Common myeloid progenitor, CD34-positive (primary cell): ENCODE measurements at regions of chr14 and their contacts with region 1.

Region 1: GRCh38 chr14:58833634-58834378 is 196.0 kb downstream of the DACT1 start:
- DNase-seq: no peak
- H3K4me3 ChIP-seq: no peak overlapping the region
- H3K27ac ChIP-seq: no peak overlapping the region
- H3K4me1 ChIP-seq: no peaks in the 10 kb centered on the region
- H3K27me3 ChIP-seq: no peaks in the 10 kb centered on the region

Region 2: DNA sequence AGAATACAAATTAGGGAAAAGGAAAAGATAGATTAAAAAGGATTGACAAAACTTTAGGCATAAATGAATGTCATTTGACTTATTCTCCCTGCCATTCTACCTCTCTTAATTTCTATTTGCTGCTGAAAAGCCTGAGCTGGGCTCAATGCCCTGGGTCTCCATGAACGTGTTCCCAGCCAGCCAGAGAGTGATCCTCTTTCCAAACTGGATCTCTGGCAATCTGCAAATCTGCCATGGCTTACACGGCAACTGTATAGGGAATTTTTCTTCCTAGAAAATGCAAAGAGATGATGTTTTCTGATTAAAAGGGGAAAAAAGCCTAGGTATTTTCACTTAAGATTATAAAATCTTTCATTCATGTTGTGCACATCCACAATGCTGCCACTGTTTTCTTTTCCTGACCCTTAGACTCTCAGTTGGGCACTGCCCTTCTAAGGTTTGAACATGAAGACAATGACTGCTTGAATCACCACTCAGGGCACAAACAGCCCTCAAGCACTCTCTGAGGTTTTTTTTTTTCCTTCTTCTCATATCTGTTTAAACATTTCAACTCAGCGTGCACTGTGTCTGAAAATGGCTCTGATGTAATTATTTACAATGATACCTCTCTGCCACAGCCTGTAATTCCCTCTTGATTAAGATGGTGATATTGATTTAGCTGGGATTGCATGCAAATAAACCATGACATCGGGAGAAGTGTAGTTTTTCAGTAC is 135.7 kb before region 1 on chr14:
- CTCF ChIA-PET with region 1: no interaction called
- POLR2A ChIA-PET with region 1: no interaction called
- DNase-seq: no peak
- H3K4me3 ChIP-seq: no peak overlapping the region
- H3K27ac ChIP-seq: no peak overlapping the region
- H3K4me1 ChIP-seq: no peaks in the 10 kb centered on the region
- H3K27me3 ChIP-seq: no peaks in the 10 kb centered on the region

Region 3: GRCh38 chr14:58794993-58795762 is 38.6 kb before region 1 on chr14:
- CTCF ChIA-PET with region 1: no interaction called
- POLR2A ChIA-PET with region 1: interaction called, 10 read pairs
- DNase-seq: no peak
- H3K4me3 ChIP-seq: no peak overlapping the region
- H3K27ac ChIP-seq: no peak overlapping the region
- H3K4me1 ChIP-seq: no peaks in the 10 kb centered on the region
- H3K27me3 ChIP-seq: no peaks in the 10 kb centered on the region

Region 4: DNA sequence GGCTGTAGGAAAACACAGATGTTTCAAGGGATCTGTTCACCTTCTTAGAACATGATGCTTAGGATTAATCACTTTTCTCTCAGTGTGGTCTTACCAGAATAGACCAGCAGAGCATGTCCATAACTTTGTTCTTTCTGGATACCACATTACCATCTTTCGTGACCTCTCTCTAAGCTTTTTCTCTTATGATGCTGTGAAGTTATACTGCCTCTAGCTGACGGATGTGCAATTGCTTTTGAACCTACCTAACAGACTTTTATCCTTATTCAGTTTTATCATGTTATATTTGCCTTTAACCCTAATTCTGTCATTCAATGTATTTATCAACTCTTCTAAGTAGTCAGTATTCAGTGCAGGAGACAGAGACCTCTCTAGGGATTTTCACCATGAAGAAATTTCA is 50.6 kb after region 1 on chr14:
- CTCF ChIA-PET with region 1: no interaction called
- POLR2A ChIA-PET with region 1: no interaction called
- DNase-seq: no peak
- H3K4me3 ChIP-seq: no peak overlapping the region
- H3K27ac ChIP-seq: no peak overlapping the region
- H3K4me1 ChIP-seq: no peaks in the 10 kb centered on the region
- H3K27me3 ChIP-seq: no peaks in the 10 kb centered on the region